ENCODE measurements at regions of chr18 and their contacts with region 1.

Region 1: DNA sequence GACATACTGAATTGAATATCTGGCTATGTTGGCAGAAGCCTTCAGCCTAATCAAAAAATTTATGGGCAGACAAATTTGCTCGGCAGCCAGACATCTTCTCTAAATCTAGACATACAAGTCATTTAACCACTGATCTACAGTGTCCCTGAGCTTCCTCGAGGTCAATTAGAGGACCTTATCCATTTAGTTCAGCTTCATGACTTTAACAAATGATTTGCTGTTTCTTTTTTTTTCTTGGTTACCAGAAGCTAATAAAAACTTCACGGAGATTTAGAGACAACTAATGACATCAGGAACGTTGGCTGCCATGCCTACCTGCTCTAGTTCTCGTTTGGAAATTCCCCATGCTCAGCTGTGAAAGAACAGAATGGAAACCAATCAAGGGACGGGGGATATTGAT is 223.8 kb downstream of the BCL2 start:
- DNase-seq: no peak
- H3K4me3 ChIP-seq: no peak overlapping the region
- H3K27ac ChIP-seq: no peak overlapping the region
- H3K4me1 ChIP-seq: peaks cover 0 to 18% (median 3%) of the 10 kb centered on the region in 4 donors
- H3K27me3 ChIP-seq: peaks cover 0 to 7% of the 10 kb centered on the region in 2 donors
- CTCF ChIP-seq: no peak

Region 2: GRCh38 chr18:63119647-63120046 is 23.9 kb after region 1 on chr18:
- intact Hi-C with region 1: loop called (anchors 1 kb)
- DNase-seq: no peak
- H3K4me3 ChIP-seq: no peak overlapping the region
- H3K27ac ChIP-seq: no peak overlapping the region
- H3K4me1 ChIP-seq: peaks cover 0 to 17% (median 8%) of the 10 kb centered on the region in 4 donors
- H3K27me3 ChIP-seq: no peaks in the 10 kb centered on the region
- CTCF ChIP-seq: peak; percentile 43